ENCODE measurements at regions of chr2 and their contacts with region 1.

Region 1: DNA sequence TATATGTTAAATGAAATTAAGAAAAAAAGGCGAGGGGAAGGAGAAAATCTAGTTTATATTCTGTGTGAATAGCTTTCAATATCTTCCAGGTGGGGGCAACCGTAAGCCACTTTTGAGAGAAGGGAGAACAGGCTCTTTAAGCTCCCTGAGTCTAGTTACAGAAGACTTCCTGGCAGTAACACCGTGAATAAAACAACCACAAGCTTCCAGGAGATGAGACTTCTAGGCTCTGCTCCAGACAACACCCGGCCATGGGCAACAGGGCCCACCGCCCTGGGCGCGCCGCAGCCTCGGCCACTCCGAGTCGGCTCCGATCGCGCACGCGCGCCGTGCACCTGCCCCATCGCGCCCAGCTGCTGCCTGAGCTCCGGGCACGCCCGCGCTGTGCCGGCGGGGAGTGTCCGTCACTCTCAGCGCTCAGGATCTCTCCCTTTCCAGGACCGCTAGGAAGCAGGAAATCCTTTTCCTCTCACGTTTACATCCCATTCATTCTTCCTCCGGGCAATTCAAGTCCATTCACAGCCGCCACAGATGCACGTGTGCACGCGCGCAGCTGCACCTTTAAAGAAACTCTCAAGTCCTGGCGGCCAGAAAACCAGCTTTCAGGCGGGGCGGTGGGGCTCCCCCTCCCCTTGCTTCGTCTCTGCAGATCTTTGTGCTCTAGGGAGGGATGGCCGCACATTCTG is 19.4 kb upstream of the PAX3 start:
- DNase-seq: no peak
- H3K4me3 Mint-ChIP-seq: peak overlapping the region; percentile 67
- H3K27ac Mint-ChIP-seq: no peak overlapping the region
- H3K4me1 Mint-ChIP-seq: peaks cover 13% of the 10 kb centered on the region
- H3K27me3 Mint-ChIP-seq: peaks cover 56% of the 10 kb centered on the region

Region 2: GRCh38 chr2:222483513-222484039 is 165.4 kb after region 1 on chr2:
- CTCF ChIA-PET with region 1: interaction called, 15 read pairs
- DNase-seq: no peak
- H3K4me3 Mint-ChIP-seq: no peak overlapping the region
- H3K27ac Mint-ChIP-seq: no peak overlapping the region
- H3K4me1 Mint-ChIP-seq: no peaks in the 10 kb centered on the region
- H3K27me3 Mint-ChIP-seq: no peaks in the 10 kb centered on the region

Region 3: GRCh38 chr2:222561817-222562645 is 243.9 kb after region 1 on chr2:
- CTCF ChIA-PET with region 1: interaction called, 60 read pairs
- DNase-seq: peak; percentile 43
- H3K4me3 Mint-ChIP-seq: no peak overlapping the region
- H3K27ac Mint-ChIP-seq: no peak overlapping the region
- H3K4me1 Mint-ChIP-seq: no peaks in the 10 kb centered on the region
- H3K27me3 Mint-ChIP-seq: no peaks in the 10 kb centered on the region

Region 4: GRCh38 chr2:222613715-222614331 is 295.7 kb after region 1 on chr2:
- CTCF ChIA-PET with region 1: interaction called, 14 read pairs
- DNase-seq: no peak
- H3K4me3 Mint-ChIP-seq: no peak overlapping the region
- H3K27ac Mint-ChIP-seq: no peak overlapping the region
- H3K4me1 Mint-ChIP-seq: no peaks in the 10 kb centered on the region
- H3K27me3 Mint-ChIP-seq: no peaks in the 10 kb centered on the region

Measured in activated naive CD4-positive, alpha-beta T cell treated with anti-CD3 and anti-CD28 coated beads, Interleukin-2, amount 10 ng/mL, durations not matched to agents 7 days and 5 days (primary cell).